Mammary epithelial cell (primary cell): ENCODE measurements at regions of chr22 and their contacts with region 1.

Region 1: DNA sequence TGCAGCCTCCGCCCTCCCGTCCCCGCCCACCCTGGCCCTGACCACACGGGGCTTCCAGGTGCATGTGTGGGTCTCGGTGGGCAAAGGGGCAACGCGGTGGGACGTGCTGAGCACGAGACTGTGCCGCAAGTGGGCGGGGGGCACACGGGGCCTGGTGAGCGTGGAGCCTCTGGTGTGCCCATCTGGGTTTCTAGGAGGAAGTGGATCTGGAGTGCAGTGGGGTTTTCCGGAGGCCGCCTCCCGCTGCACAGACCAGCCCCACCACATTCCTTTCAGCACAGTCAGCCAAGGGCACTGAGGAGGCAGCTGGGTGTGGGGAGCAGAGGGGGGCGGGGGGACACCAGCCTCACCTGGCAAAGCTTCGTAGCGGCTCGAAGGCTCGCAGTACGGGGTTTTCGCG is 12.2 kb upstream of the MAPK11 start:
- DNase-seq: peak; percentile 95
- H3K4me3 ChIP-seq: peak overlapping the region in 1 of 3 experiments; percentile 13
- H3K27ac ChIP-seq: peak overlapping the region; percentile 35
- H3K4me1 ChIP-seq: peaks cover 22% of the 10 kb centered on the region
- H3K27me3 ChIP-seq: no peaks in the 10 kb centered on the region
- CTCF ChIP-seq: no peak

Region 2: DNA sequence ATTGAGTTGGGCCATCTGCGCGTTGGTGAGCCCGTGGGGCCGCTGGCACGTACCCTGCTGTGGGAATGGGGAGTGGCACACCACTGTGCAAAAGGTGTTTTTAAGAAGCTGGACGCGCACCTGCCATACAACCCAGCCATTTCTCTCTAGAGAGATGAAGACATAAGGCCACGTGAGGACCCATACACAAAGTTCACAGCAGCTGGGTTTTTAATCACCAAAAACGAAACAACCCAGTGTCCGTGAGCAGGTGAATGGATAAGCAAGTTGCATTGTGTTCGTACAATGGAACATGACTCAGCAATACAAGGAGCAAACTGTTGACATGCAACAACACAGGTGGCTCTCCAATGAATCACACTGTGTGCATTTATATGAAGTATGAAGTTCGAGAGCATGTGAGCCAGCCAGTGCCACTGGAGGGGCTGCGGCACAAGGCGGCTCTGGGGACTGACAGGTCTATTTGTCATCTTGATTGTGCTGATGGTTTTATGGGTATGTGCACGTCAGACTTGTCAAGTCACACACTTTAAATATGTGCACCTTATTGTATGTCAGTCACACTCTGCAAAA is 142.4 kb before region 1 on chr22:
- CTCF ChIA-PET with region 1: no interaction called
- dilution Hi-C with region 1: loop called (anchors 10 kb)
- in situ Hi-C with region 1: no loop called
- intact Hi-C with region 1: no loop called
- DNase-seq: peak; percentile 8
- H3K4me3 ChIP-seq: no peak overlapping the region
- H3K27ac ChIP-seq: no peak overlapping the region
- H3K4me1 ChIP-seq: no peaks in the 10 kb centered on the region
- H3K27me3 ChIP-seq: no peaks in the 10 kb centered on the region
- CTCF ChIP-seq: no peak

Region 3: GRCh38 chr22:50185384-50186087 is 96.8 kb before region 1 on chr22 and contains the start of gene TRABD:
- CTCF ChIA-PET with region 1: no interaction called
- dilution Hi-C with region 1: loop called (anchors 10 kb)
- in situ Hi-C with region 1: no loop called
- intact Hi-C with region 1: no loop called
- DNase-seq: peak; percentile 81
- H3K4me3 ChIP-seq: peak within 1 kb of the TSS; percentile 75 to 98 (median 75)
- H3K27ac ChIP-seq: peak within 1 kb of the TSS; percentile 40
- H3K4me1 ChIP-seq: peaks cover 38% of the 10 kb centered on the region
- H3K27me3 ChIP-seq: no peaks in the 10 kb centered on the region
- CTCF ChIP-seq: no peak
- total RNA-seq, gene TRABD: 25.8 to 63.5 TPM

Region 4: GRCh38 chr22:50236731-50237409 is 45.5 kb before region 1 on chr22:
- CTCF ChIA-PET with region 1: no interaction called
- dilution Hi-C with region 1: no loop called
- in situ Hi-C with region 1: no loop called
- intact Hi-C with region 1: no loop called
- DNase-seq: no peak
- H3K4me3 ChIP-seq: no peak overlapping the region
- H3K27ac ChIP-seq: no peak overlapping the region
- H3K4me1 ChIP-seq: peaks cover 5% of the 10 kb centered on the region
- H3K27me3 ChIP-seq: no peaks in the 10 kb centered on the region
- CTCF ChIP-seq: peak; percentile 50 to 51

Region 5: GRCh38 chr22:50293441-50294318 is 11.3 kb after region 1 on chr22:
- CTCF ChIA-PET with region 1: no interaction called
- dilution Hi-C with region 1: no loop called
- in situ Hi-C with region 1: no loop called
- intact Hi-C with region 1: loop called (anchors 1 kb)
- DNase-seq: peak; percentile 58
- H3K4me3 ChIP-seq: peak overlapping the region; percentile 15 to 43 (median 26)
- H3K27ac ChIP-seq: peak overlapping the region; percentile 49
- H3K4me1 ChIP-seq: peaks cover 49% of the 10 kb centered on the region
- H3K27me3 ChIP-seq: no peaks in the 10 kb centered on the region
- CTCF ChIP-seq: no peak

Region 6: GRCh38 chr22:50306753-50307749 is 24.7 kb after region 1 on chr22 and contains the start of gene PLXNB2:
- CTCF ChIA-PET with region 1: no interaction called
- dilution Hi-C with region 1: no loop called
- in situ Hi-C with region 1: no loop called
- intact Hi-C with region 1: loop called (anchors 1 kb)
- DNase-seq: peak; percentile 65
- H3K4me3 ChIP-seq: peak within 1 kb of the TSS; percentile 71 to 79 (median 75)
- H3K27ac ChIP-seq: peak within 1 kb of the TSS; percentile 53
- H3K4me1 ChIP-seq: peaks cover 37% of the 10 kb centered on the region
- H3K27me3 ChIP-seq: no peaks in the 10 kb centered on the region
- CTCF ChIP-seq: no peak
- total RNA-seq, gene PLXNB2: 122 to 240 TPM

Region 7: DNA sequence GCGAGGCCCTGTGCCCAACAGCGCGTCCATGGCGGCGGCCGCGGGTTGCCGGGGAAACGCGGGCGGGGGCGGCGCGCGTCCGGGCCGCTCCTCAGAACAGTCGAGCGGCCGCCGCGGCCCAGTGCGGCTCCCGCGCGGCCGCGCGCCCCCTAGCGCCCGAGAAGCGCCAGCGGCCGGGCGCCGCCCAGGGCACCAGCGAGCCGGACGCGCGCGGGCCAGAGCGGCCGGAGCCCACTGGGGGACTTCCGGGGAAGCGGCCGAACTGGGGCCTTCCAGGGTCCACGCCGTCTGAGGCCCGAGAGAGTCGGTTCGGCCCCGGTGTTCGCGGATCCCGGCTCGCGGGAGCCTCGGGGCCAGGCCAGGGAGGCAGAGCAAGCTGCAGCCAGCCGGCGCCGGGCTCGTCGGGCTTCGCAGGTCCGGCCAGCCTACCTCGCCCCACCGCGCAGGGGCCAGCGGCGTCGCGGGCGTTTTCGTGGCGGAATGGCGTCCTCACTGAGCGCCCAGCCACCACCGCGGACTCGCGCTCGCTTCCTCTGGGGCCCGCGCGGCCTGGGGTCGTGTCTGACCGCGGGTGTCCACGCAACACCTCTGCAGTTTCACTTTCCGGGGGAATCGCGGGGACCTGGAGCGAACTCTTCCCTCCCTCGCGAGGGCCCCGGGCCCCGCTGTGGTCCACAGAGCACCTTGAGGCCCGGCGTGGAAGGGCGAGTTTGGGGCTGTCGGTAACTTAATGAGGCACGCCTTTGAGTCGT is 44.8 kb after region 1 on chr22 and contains the start of gene DENND6B:
- CTCF ChIA-PET with region 1: interaction called, 6 read pairs
- dilution Hi-C with region 1: no loop called
- in situ Hi-C with region 1: loop called (anchors 5 to 10 kb)
- intact Hi-C with region 1: loop called (anchors 2 kb)
- DNase-seq: peak; percentile 64
- H3K4me3 ChIP-seq: peak within 1 kb of the TSS; percentile 26 to 80 (median 77)
- H3K27ac ChIP-seq: peak within 1 kb of the TSS; percentile 54
- H3K4me1 ChIP-seq: peaks cover 13% of the 10 kb centered on the region
- H3K27me3 ChIP-seq: no peaks in the 10 kb centered on the region
- CTCF ChIP-seq: peak; percentile 40 to 45
- total RNA-seq, gene DENND6B: 2.0 to 3.4 TPM

Region 8: GRCh38 chr22:50456466-50457234 is 174.3 kb after region 1 on chr22:
- CTCF ChIA-PET with region 1: no interaction called
- dilution Hi-C with region 1: loop called (anchors 10 kb)
- in situ Hi-C with region 1: no loop called
- intact Hi-C with region 1: no loop called
- DNase-seq: no peak
- H3K4me3 ChIP-seq: no peak overlapping the region
- H3K27ac ChIP-seq: no peak overlapping the region
- H3K4me1 ChIP-seq: no peaks in the 10 kb centered on the region
- H3K27me3 ChIP-seq: no peaks in the 10 kb centered on the region
- CTCF ChIP-seq: peak in 1 of 2 donors; percentile 25